Cardiac septum (tissue), 1 donor: ENCODE measurements at regions of chr6 and their contacts with region 1.

Region 1: GRCh38 chr6:56364827-56365313 is 117.5 kb upstream of the COL21A1 start:
- DNase-seq: no peak

Region 2: DNA sequence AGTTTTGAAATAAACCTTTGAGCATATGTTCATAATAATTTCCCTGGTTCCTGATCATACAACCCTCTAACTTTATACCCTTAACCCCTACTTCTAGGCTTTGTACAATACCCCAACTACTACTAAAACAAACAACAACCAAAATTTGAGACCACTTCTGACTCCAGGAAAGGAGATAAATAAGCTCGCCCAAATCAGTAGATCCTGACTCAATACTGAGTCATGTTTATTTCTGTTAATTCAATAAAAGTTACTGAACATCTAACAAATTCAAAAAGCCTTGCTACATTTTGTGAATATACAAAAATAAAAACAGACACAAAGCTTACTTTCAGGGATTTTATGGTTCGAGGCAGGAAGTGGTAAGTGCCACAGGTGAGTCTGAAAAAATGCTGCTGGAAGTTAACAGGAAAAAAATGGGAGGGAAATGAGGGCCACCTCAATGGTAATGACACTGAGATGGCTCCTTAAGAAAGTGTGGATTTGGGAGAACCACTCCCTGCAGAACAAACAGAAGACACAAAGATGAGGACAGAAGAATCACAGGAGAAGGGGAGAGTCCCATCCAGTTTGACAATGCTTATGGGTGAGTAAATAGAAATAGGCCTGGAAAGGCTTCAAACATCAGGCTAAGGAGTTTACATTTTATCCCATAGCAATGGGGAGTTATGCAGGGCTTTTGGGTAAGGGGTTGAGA is 214.4 kb after region 1 on chr6:
- intact Hi-C with region 1: loop called (anchors 5 kb)
- DNase-seq: no peak